Caco-2 (cell line): ENCODE measurements at regions of chr3 and their contacts with region 1.

Region 1: GRCh38 chr3:20340324-20340928 is 154.4 kb upstream of the SGO1 start:
- DNase-seq: peak; percentile 63 to 79
- H3K4me3 ChIP-seq: no peak overlapping the region
- H3K4me3 Mint-ChIP-seq: no peak overlapping the region
- H3K27ac Mint-ChIP-seq: no peak overlapping the region
- H3K4me1 ChIP-seq: peaks cover 11% of the 10 kb centered on the region
- H3K4me1 Mint-ChIP-seq: no peaks in the 10 kb centered on the region
- H3K27me3 ChIP-seq: no peaks in the 10 kb centered on the region
- H3K27me3 Mint-ChIP-seq: no peaks in the 10 kb centered on the region
- CTCF ChIP-seq: peak; percentile 84 to 85

Region 2: GRCh38 chr3:20130106-20130505 is 210.3 kb before region 1 on chr3:
- CTCF ChIA-PET with region 1: no interaction called
- POLR2A ChIA-PET with region 1: no interaction called
- intact Hi-C with region 1: loop called (anchors 1 kb)
- DNase-seq: no peak
- H3K4me3 ChIP-seq: no peak overlapping the region
- H3K4me3 Mint-ChIP-seq: no peak overlapping the region
- H3K27ac Mint-ChIP-seq: no peak overlapping the region
- H3K4me1 ChIP-seq: no peaks in the 10 kb centered on the region
- H3K4me1 Mint-ChIP-seq: no peaks in the 10 kb centered on the region
- H3K27me3 ChIP-seq: no peaks in the 10 kb centered on the region
- H3K27me3 Mint-ChIP-seq: no peaks in the 10 kb centered on the region
- CTCF ChIP-seq: peak in 1 of 2 experiments; percentile 3

Region 3: DNA sequence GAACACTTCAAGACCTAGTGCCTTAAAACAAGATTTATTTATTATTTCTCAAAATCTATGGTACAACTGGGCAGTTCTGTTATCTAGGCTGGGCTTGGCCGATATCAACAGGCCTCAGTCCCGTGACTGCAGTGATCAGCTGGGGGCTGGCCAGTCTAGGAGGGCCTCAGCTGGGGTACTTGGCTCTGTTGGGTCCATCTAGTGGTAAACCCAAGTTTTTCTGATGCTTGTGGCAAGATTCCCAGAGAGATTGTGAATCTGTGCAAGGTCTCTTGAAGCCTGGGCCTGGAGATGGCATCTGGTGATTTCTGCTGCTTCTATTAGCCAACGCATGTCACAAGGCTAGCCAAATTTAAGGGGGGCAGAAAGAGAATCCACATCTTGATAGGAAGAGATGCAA is 328.0 kb after region 1 on chr3:
- CTCF ChIA-PET with region 1: no interaction called
- POLR2A ChIA-PET with region 1: no interaction called
- intact Hi-C with region 1: loop called (anchors 2 kb)
- DNase-seq: peak; percentile 30
- H3K4me3 ChIP-seq: no peak overlapping the region
- H3K4me3 Mint-ChIP-seq: no peak overlapping the region
- H3K27ac Mint-ChIP-seq: no peak overlapping the region
- H3K4me1 ChIP-seq: no peaks in the 10 kb centered on the region
- H3K4me1 Mint-ChIP-seq: no peaks in the 10 kb centered on the region
- H3K27me3 ChIP-seq: no peaks in the 10 kb centered on the region
- H3K27me3 Mint-ChIP-seq: peaks cover 6% of the 10 kb centered on the region
- CTCF ChIP-seq: peak in 1 of 2 experiments; percentile 35

Region 4: GRCh38 chr3:20930034-20930433 is 589.6 kb after region 1 on chr3:
- CTCF ChIA-PET with region 1: no interaction called
- POLR2A ChIA-PET with region 1: no interaction called
- intact Hi-C with region 1: loop called (anchors 1 kb)
- DNase-seq: peak in 1 of 2 experiments; percentile 27
- H3K4me3 ChIP-seq: no peak overlapping the region
- H3K4me3 Mint-ChIP-seq: no peak overlapping the region
- H3K27ac Mint-ChIP-seq: no peak overlapping the region
- H3K4me1 ChIP-seq: no peaks in the 10 kb centered on the region
- H3K4me1 Mint-ChIP-seq: no peaks in the 10 kb centered on the region
- H3K27me3 ChIP-seq: no peaks in the 10 kb centered on the region
- H3K27me3 Mint-ChIP-seq: peaks cover 4% of the 10 kb centered on the region
- CTCF ChIP-seq: peak in 1 of 2 experiments; percentile 36

Region 5: GRCh38 chr3:21216598-21216997 is 876.2 kb after region 1 on chr3:
- CTCF ChIA-PET with region 1: no interaction called
- POLR2A ChIA-PET with region 1: no interaction called
- intact Hi-C with region 1: loop called (anchors 1 kb)
- DNase-seq: peak in 1 of 2 experiments; percentile 9
- H3K4me3 ChIP-seq: no peak overlapping the region
- H3K4me3 Mint-ChIP-seq: no peak overlapping the region
- H3K27ac Mint-ChIP-seq: no peak overlapping the region
- H3K4me1 ChIP-seq: no peaks in the 10 kb centered on the region
- H3K4me1 Mint-ChIP-seq: no peaks in the 10 kb centered on the region
- H3K27me3 ChIP-seq: no peaks in the 10 kb centered on the region
- H3K27me3 Mint-ChIP-seq: no peaks in the 10 kb centered on the region
- CTCF ChIP-seq: peak; percentile 22 to 38

Region 6: GRCh38 chr3:21484057-21484827 is 1143.8 kb after region 1 on chr3:
- CTCF ChIA-PET with region 1: no interaction called
- POLR2A ChIA-PET with region 1: no interaction called
- intact Hi-C with region 1: loop called (anchors 1 kb)
- DNase-seq: peak; percentile 43 to 57
- H3K4me3 ChIP-seq: no peak overlapping the region
- H3K4me3 Mint-ChIP-seq: no peak overlapping the region
- H3K27ac Mint-ChIP-seq: no peak overlapping the region
- H3K4me1 ChIP-seq: no peaks in the 10 kb centered on the region
- H3K4me1 Mint-ChIP-seq: no peaks in the 10 kb centered on the region
- H3K27me3 ChIP-seq: no peaks in the 10 kb centered on the region
- H3K27me3 Mint-ChIP-seq: no peaks in the 10 kb centered on the region
- CTCF ChIP-seq: peak; percentile 48 to 64